Activated T-helper 2 cell treated with anti-CD3 and anti-CD28 coated beads, Interferon-gamma antibody, Interleukin-2, Interleukin-4, amounts not matched to agents 10 μg/mL and 5 μg/mL and 100 μg/mL, durations not matched to agents 14 hours and 24 hours and 36 hours (primary cell): ENCODE measurements at regions of chr18 and their contacts with region 1.

Region 1: DNA sequence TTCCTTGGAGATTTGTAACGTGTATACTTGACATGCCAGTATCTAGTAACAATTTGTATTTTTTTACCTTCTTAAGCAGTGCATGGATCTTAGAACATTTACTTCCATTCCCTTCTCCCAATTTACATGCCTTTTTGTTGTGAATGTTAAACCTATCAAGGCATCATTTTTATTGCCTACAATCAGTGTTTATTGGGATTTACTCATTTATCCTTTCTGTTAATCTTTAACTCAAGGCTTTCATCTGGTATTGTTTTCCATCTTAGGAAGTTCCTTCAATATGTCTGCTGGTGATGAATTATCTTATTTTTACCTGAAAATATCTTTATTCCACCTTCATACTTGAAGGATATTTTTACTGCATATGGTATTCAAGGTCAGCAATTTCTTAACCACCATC is 88.5 kb upstream of the EMILIN2 start:
- DNase-seq: no peak
- H3K4me3 Mint-ChIP-seq: no peak overlapping the region
- H3K27ac Mint-ChIP-seq: peak overlapping the region; percentile 59
- H3K4me1 Mint-ChIP-seq: peaks cover 9% of the 10 kb centered on the region
- H3K27me3 Mint-ChIP-seq: no peaks in the 10 kb centered on the region

Region 2: DNA sequence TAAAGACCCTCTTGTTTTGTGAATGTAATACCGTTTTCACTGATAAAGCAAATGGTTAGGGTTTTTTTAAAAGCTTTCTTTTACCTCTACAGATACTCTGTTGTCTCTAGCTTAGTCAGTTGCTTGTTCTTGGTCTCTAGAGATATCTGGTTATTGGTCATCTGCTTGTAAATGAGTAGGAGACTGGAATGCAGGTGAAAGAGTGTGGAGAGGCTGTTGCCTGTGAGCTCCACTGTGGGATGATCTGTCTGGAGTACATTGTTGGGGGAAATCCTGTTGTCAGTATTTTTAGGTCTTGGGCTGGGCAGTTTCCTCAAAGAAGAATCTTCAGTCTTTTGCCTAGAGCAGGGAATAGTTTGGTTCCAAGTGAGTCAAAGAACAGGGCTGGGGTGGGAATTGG is 35.1 kb before region 1 on chr18:
- intact Hi-C with region 1: no loop called
- DNase-seq: no peak
- H3K4me3 Mint-ChIP-seq: no peak overlapping the region
- H3K27ac Mint-ChIP-seq: peak overlapping the region; percentile 44
- H3K4me1 Mint-ChIP-seq: peaks cover 25% of the 10 kb centered on the region
- H3K27me3 Mint-ChIP-seq: no peaks in the 10 kb centered on the region

Region 3: GRCh38 chr18:2797951-2798350 is 39.6 kb after region 1 on chr18:
- intact Hi-C with region 1: loop called (anchors 5 kb)
- DNase-seq: no peak
- H3K4me3 Mint-ChIP-seq: no peak overlapping the region
- H3K27ac Mint-ChIP-seq: no peak overlapping the region
- H3K4me1 Mint-ChIP-seq: peaks cover 3% of the 10 kb centered on the region
- H3K27me3 Mint-ChIP-seq: no peaks in the 10 kb centered on the region